ENCODE measurements at regions of chr3 and their contacts with region 1.

Region 1: GRCh38 chr3:195271116-195271858 is at the start of gene XXYLT1:
- DNase-seq: peak; percentile 93
- H3K4me3 ChIP-seq: peak within 1 kb of the TSS; percentile 93
- H3K27ac ChIP-seq: peak within 1 kb of the TSS; percentile 52
- H3K4me1 ChIP-seq: peaks cover 15% of the 10 kb centered on the region
- H3K27me3 ChIP-seq: no peaks in the 10 kb centered on the region
- total RNA-seq, gene XXYLT1: 42.4 and 44.7 TPM in 2 replicates

Region 2: DNA sequence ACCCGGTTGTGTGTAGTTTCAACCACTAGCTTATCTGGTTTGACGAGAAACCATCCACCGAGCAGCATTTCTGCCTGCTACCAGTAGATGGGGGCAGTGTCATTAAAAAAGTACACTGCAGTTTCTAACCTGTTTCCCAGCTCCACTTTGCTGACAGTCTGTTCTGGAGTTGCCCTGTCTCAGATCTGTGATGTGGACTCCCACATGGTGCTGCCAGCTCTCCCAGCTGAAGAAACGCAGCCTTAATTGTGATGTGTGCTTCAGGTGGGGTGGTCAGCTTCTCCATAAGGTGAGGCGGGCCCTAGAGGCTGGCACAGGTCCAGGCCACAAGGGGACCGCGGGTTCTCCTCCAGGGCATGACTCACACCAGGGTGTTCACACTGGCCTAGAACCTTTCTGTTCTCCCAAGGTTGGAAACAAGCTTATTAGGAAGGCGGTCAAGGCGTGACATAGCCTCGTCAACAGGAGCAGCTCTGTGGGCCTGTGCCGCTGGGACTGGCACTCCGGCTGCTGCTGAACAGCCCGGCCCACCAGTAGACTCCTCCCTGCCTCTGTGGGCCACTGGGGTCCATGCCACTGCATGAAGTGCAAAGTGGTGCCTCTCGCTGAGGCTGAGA is 588.5 kb before region 1 on chr3:
- in situ Hi-C with region 1: loop called (anchors 5 kb)
- DNase-seq: peak; percentile 91
- H3K4me3 ChIP-seq: 0 out of 2 replicates have a peak overlapping the region, but pooled peaks have one; percentile 6
- H3K27ac ChIP-seq: peak overlapping the region; percentile 25
- H3K4me1 ChIP-seq: peaks cover 12% of the 10 kb centered on the region
- H3K27me3 ChIP-seq: no peaks in the 10 kb centered on the region

Region 3: GRCh38 chr3:195522254-195523023 is 251.2 kb after region 1 on chr3:
- in situ Hi-C with region 1: loop called (anchors 5 kb)
- DNase-seq: peak; percentile 67
- H3K4me3 ChIP-seq: no peak overlapping the region
- H3K27ac ChIP-seq: no peak overlapping the region
- H3K4me1 ChIP-seq: no peaks in the 10 kb centered on the region
- H3K27me3 ChIP-seq: no peaks in the 10 kb centered on the region

Region 4: GRCh38 chr3:195815169-195815771 is 544.0 kb after region 1 on chr3:
- in situ Hi-C with region 1: no loop called
- DNase-seq: no peak
- H3K4me3 ChIP-seq: no peak overlapping the region
- H3K27ac ChIP-seq: no peak overlapping the region
- H3K4me1 ChIP-seq: no peaks in the 10 kb centered on the region
- H3K27me3 ChIP-seq: peaks cover 8% of the 10 kb centered on the region